PC-3 (cell line): ENCODE measurements at regions of chrX and their contacts with region 1.

Region 1: DNA sequence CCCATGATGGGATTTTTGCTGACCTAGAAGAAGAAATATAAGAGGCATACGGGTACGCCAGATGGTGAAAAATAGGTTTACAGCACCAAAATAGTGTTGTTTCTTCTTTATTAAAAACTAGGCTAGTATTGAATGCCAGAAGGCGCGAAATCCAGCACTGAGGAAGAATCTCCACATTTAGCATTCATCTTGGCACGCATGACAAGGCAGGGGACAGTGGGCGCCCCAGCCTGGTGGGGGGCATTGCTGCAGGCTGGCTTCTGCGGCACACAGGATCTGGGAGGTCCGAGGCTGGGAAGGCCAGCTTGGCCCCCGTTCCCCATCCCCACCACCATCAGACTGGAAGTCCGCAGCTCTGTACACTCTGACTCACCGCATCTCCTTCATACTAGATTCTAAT is 75.7 kb upstream of the DDX3X start:
- DNase-seq: no peak
- ATAC-seq: no peak
- H3K4me3 ChIP-seq: no peak overlapping the region
- H3K27ac ChIP-seq: no peak overlapping the region
- H3K4me1 ChIP-seq: no peaks in the 10 kb centered on the region
- H3K27me3 ChIP-seq: no peaks in the 10 kb centered on the region
- CTCF ChIP-seq: no peak

Region 2: GRCh38 chrX:41180194-41180908 is 77.9 kb before region 1 on chrX:
- CTCF ChIA-PET with region 1: no interaction called
- POLR2A ChIA-PET with region 1: no interaction called
- intact Hi-C with region 1: loop called (anchors 1 kb)
- DNase-seq: peak; percentile 67
- ATAC-seq: peak; percentile 73
- H3K4me3 ChIP-seq: no peak overlapping the region
- H3K27ac ChIP-seq: no peak overlapping the region
- H3K4me1 ChIP-seq: no peaks in the 10 kb centered on the region
- H3K27me3 ChIP-seq: no peaks in the 10 kb centered on the region
- CTCF ChIP-seq: peak; percentile 77